A673 (cell line): ENCODE measurements at regions of chr4 and their contacts with region 1.

Region 1: DNA sequence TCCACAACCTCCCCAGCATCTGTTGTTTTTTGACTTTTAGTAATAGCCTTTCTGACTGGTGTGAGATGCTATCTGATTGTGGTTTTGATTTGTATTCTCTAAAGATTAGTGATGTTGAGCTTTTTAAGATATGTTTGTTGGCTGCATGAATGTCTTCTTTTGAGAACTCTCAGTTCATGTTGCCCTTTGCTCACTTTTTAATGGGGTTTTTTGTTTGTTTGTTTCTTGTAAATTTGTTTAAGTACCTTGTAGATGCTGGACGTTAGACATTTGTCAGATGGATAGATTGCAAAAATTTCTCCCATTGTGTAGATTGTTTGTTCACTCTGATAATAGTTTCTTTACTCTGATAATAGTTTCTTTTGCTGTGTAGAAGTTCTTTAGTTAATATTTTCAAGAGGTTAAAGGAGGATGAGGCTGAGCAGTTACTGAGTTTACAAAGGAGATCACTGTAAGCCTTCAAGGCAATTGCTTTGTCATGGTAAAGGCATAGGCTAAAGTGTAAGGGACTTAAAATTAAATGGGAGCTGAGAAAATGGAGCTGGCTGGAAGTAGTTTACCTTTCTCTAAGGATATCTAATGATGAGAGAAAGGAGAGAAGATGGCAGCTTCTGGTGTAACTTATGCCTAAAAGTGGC is 323.4 kb downstream of the PCDH7 start:
- DNase-seq: no peak
- H3K4me3 ChIP-seq: no peak overlapping the region
- H3K27ac ChIP-seq: peak overlapping the region; percentile 32
- H3K4me1 ChIP-seq: peaks cover 77% of the 10 kb centered on the region
- H3K27me3 ChIP-seq: no peaks in the 10 kb centered on the region
- CTCF ChIP-seq: no peak

Region 2: GRCh38 chr4:30350288-30350687 is 693.3 kb before region 1 on chr4:
- CTCF ChIA-PET with region 1: no interaction called
- POLR2A ChIA-PET with region 1: no interaction called
- intact Hi-C with region 1: no loop called
- DNase-seq: no peak
- H3K4me3 ChIP-seq: no peak overlapping the region
- H3K27ac ChIP-seq: no peak overlapping the region
- H3K4me1 ChIP-seq: no peaks in the 10 kb centered on the region
- H3K27me3 ChIP-seq: no peaks in the 10 kb centered on the region
- CTCF ChIP-seq: no peak

Region 3: GRCh38 chr4:31089815-31090214 is 46.3 kb after region 1 on chr4:
- CTCF ChIA-PET with region 1: no interaction called
- POLR2A ChIA-PET with region 1: interaction called, 15 read pairs
- intact Hi-C with region 1: no loop called
- DNase-seq: peak; percentile 35
- H3K4me3 ChIP-seq: no peak overlapping the region
- H3K27ac ChIP-seq: no peak overlapping the region
- H3K4me1 ChIP-seq: peaks cover 56% of the 10 kb centered on the region
- H3K27me3 ChIP-seq: no peaks in the 10 kb centered on the region
- CTCF ChIP-seq: no peak